CD4-positive, alpha-beta memory T cell (primary cell): ENCODE measurements at regions of chr6 and their contacts with region 1.

Region 1: DNA sequence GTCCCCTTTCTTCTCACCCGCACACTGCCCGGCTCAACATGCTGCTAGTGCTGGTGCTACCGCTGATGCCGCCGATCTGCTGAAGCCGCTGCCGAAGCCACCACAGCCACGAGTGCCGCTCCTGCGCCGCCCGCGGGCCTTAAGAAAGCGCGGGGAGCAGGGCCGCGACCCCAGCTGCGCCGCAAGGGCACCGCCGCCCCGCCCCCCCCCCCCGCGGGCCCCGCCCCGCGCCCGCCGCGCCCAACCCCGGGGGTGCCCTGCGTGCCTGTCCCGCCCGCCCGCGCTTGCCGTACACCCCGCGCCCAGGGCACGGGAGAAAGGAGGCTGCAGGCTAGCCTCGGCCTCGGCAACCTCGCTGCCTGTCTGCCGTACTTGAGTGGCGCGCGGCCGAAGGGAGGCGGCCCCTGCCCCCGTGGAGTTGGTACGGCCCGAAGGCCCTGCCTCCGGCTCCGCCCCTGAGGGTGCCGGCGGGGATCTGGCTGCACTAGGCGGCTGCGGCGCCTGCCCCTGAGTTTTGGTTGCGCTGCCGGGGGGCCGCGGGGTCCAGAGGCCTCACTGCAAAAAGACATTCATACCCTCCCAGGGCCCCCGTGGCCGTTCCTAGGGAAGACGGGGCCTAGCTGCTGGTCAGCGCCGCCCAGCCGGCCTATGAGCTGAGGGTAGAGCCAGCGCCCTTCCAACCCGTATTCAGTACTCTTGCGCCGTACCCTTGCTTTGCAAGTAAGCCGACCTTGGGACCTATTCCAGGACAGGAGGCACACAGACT is at the start of gene SOD2:
- DNase-seq: peak; percentile 85 to 90 (median 86)
- H3K4me3 ChIP-seq: peak within 1 kb of the TSS; percentile 87 to 88
- H3K4me3 Mint-ChIP-seq: peak within 1 kb of the TSS; percentile 93 to 100 (median 96)
- H3K27ac ChIP-seq: peak within 1 kb of the TSS; percentile 64
- H3K27ac Mint-ChIP-seq: peak within 1 kb of the TSS; percentile 96 to 99 (median 98)
- H3K4me1 ChIP-seq: peaks cover 50% of the 10 kb centered on the region
- H3K4me1 Mint-ChIP-seq: peaks cover 31 to 70% (median 47%) of the 10 kb centered on the region in 4 donors
- H3K27me3 ChIP-seq: no peaks in the 10 kb centered on the region
- H3K27me3 Mint-ChIP-seq: no peaks in the 10 kb centered on the region
- total RNA-seq, gene SOD2: 128 to 131 TPM

Region 2: GRCh38 chr6:159608961-159609651 is 84.2 kb before region 1 on chr6:
- CTCF ChIA-PET with region 1: no interaction called
- POLR2A ChIA-PET with region 1: no interaction called
- intact Hi-C with region 1: no loop called
- DNase-seq: no peak
- H3K4me3 ChIP-seq: no peak overlapping the region
- H3K4me3 Mint-ChIP-seq: no peak overlapping the region
- H3K27ac ChIP-seq: no peak overlapping the region
- H3K27ac Mint-ChIP-seq: no peak overlapping the region
- H3K4me1 ChIP-seq: no peaks in the 10 kb centered on the region
- H3K4me1 Mint-ChIP-seq: no peaks in the 10 kb centered on the region
- H3K27me3 ChIP-seq: no peaks in the 10 kb centered on the region
- H3K27me3 Mint-ChIP-seq: peaks cover 1 to 3% of the 10 kb centered on the region in 2 donors

Region 3: GRCh38 chr6:159682295-159682694 is 11.0 kb before region 1 on chr6:
- CTCF ChIA-PET with region 1: interaction called, 6 read pairs
- POLR2A ChIA-PET with region 1: interaction called, 16 read pairs
- intact Hi-C with region 1: no loop called
- DNase-seq: no peak
- H3K4me3 ChIP-seq: no peak overlapping the region
- H3K4me3 Mint-ChIP-seq: no peak overlapping the region
- H3K27ac ChIP-seq: no peak overlapping the region
- H3K27ac Mint-ChIP-seq: peak overlapping the region in 3 of 7 donors; percentile 6 to 69 (median 29)
- H3K4me1 ChIP-seq: peaks cover 10% of the 10 kb centered on the region
- H3K4me1 Mint-ChIP-seq: peaks cover 19 to 27% (median 24%) of the 10 kb centered on the region in 4 donors
- H3K27me3 ChIP-seq: no peaks in the 10 kb centered on the region
- H3K27me3 Mint-ChIP-seq: no peaks in the 10 kb centered on the region

Region 4: GRCh38 chr6:159726918-159727716 is 33.8 kb after region 1 on chr6 and contains the start of gene WTAP:
- CTCF ChIA-PET with region 1: interaction called, 38 read pairs
- POLR2A ChIA-PET with region 1: interaction called, 240 read pairs
- intact Hi-C with region 1: loop called (anchors 1 kb)
- DNase-seq: peak; percentile 96 to 98 (median 97)
- H3K4me3 ChIP-seq: peak within 1 kb of the TSS; percentile 39 to 78
- H3K4me3 Mint-ChIP-seq: peak within 1 kb of the TSS; percentile 91 to 96 (median 95)
- H3K27ac ChIP-seq: peak within 1 kb of the TSS; percentile 97
- H3K27ac Mint-ChIP-seq: peak within 1 kb of the TSS; percentile 99
- H3K4me1 ChIP-seq: peaks cover 65% of the 10 kb centered on the region
- H3K4me1 Mint-ChIP-seq: peaks cover 30 to 74% (median 52%) of the 10 kb centered on the region in 4 donors
- H3K27me3 ChIP-seq: no peaks in the 10 kb centered on the region
- H3K27me3 Mint-ChIP-seq: no peaks in the 10 kb centered on the region
- total RNA-seq, gene WTAP: 151 to 159 TPM

Region 5: DNA sequence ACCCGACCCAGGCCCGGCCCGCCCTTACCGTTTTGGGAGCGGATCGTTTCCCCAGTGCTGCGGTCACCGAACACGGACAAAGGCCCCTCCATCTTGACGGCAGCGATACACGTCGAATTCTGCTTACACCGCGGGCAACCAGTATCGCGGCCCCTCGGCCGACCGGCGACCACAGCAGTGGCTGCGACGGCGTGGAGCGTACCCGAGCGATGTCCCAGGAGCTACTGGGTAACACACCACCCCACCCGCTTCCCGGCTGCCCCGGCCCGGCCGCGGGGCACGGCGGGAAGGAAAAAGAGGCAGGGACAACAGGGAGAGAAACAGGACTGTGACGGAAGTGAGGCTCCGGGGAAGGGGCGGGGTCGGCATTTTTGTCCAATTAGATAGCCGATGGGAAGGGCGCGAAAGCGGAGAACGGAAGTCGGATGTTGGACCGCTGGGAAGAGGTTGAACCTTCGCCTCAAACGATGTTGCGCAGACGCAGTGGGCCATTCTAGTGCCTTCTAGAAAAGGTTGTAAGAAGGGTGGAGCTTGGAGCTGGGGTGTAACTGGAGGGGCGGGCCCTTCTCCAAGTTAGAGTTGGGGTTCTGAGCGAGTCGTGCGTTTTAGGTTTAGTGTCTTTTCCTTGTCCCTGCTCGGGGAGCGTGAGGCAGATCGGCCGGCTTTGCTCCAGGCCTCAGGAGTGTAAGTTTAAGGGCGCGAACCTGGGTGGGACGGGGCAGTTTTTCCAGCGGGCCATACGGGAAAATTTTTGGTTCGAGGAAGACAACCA is 96.3 kb after region 1 on chr6 and contains the start of gene TCP1:
- CTCF ChIA-PET with region 1: interaction called, 37 read pairs
- POLR2A ChIA-PET with region 1: interaction called, 110 read pairs
- intact Hi-C with region 1: loop called (anchors 1 kb)
- DNase-seq: peak; percentile 97 to 100 (median 98)
- H3K4me3 ChIP-seq: peak within 1 kb of the TSS; percentile 81 to 90
- H3K4me3 Mint-ChIP-seq: peak within 1 kb of the TSS; percentile 94 to 99 (median 97)
- H3K27ac ChIP-seq: peak within 1 kb of the TSS; percentile 93
- H3K27ac Mint-ChIP-seq: peak within 1 kb of the TSS; percentile 93 to 99 (median 97)
- H3K4me1 ChIP-seq: peaks cover 54% of the 10 kb centered on the region
- H3K4me1 Mint-ChIP-seq: peaks cover 32 to 75% (median 60%) of the 10 kb centered on the region in 4 donors
- H3K27me3 ChIP-seq: no peaks in the 10 kb centered on the region
- H3K27me3 Mint-ChIP-seq: no peaks in the 10 kb centered on the region
- total RNA-seq, gene TCP1: 151 to 162 TPM

Region 6: GRCh38 chr6:159941286-159942113 is 248.2 kb after region 1 on chr6:
- CTCF ChIA-PET with region 1: interaction called, 18 read pairs
- POLR2A ChIA-PET with region 1: interaction called, 3 read pairs
- intact Hi-C with region 1: loop called (anchors 1 kb)
- DNase-seq: peak; percentile 50 to 66 (median 58)
- H3K4me3 ChIP-seq: no peak overlapping the region
- H3K4me3 Mint-ChIP-seq: no peak overlapping the region
- H3K27ac ChIP-seq: no peak overlapping the region
- H3K27ac Mint-ChIP-seq: no peak overlapping the region
- H3K4me1 ChIP-seq: no peaks in the 10 kb centered on the region
- H3K4me1 Mint-ChIP-seq: peaks cover 0 to 2% (median 0%) of the 10 kb centered on the region in 4 donors
- H3K27me3 ChIP-seq: no peaks in the 10 kb centered on the region
- H3K27me3 Mint-ChIP-seq: peaks cover 1 to 2% of the 10 kb centered on the region in 2 donors

Region 7: GRCh38 chr6:160010067-160010466 is 316.8 kb after region 1 on chr6:
- CTCF ChIA-PET with region 1: no interaction called
- POLR2A ChIA-PET with region 1: interaction called, 8 read pairs
- intact Hi-C with region 1: loop called (anchors 10 kb)
- DNase-seq: no peak
- H3K4me3 ChIP-seq: no peak overlapping the region
- H3K4me3 Mint-ChIP-seq: no peak overlapping the region
- H3K27ac ChIP-seq: no peak overlapping the region
- H3K27ac Mint-ChIP-seq: no peak overlapping the region
- H3K4me1 ChIP-seq: peaks cover 32% of the 10 kb centered on the region
- H3K4me1 Mint-ChIP-seq: peaks cover 39 to 55% (median 44%) of the 10 kb centered on the region in 4 donors
- H3K27me3 ChIP-seq: no peaks in the 10 kb centered on the region
- H3K27me3 Mint-ChIP-seq: no peaks in the 10 kb centered on the region

Region 8: DNA sequence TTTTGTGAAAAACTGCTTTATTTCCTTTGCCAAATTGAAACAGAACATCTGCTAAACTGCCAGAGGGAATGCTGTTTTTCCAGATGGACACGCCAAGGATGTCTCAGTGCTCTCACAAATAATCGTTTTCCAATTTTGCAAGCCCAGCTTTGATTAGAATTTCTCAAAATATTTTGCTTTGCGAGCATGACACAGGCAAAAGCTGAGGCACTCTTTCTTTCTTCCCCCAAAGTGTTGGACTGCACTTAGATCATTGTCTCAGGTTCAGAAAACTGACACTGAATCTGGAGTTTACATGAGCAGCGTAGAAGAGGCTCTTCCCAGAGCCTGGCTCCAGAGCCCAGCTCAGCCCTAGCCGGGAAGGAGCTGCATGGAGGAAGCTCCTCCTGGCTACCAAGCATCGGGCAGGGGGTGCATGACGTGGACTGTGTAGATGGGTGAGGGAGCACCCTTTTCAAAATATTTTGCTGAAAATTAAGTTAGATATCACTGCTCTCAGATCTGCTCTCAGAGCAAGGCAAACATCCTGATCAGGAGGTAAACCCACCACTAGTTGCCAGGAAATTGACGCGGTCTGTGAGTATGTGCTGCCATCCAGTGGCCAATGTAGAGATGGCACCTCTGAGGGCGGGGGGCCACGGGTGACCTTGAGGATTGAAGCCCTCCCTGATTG is 762.4 kb after region 1 on chr6:
- CTCF ChIA-PET with region 1: interaction called, 14 read pairs
- POLR2A ChIA-PET with region 1: no interaction called
- intact Hi-C with region 1: loop called (anchors 1 kb)
- DNase-seq: peak; percentile 58 to 72 (median 68)
- H3K4me3 ChIP-seq: no peak overlapping the region
- H3K4me3 Mint-ChIP-seq: no peak overlapping the region
- H3K27ac ChIP-seq: no peak overlapping the region
- H3K27ac Mint-ChIP-seq: no peak overlapping the region
- H3K4me1 ChIP-seq: peaks cover 50% of the 10 kb centered on the region
- H3K4me1 Mint-ChIP-seq: peaks cover 29 to 36% (median 32%) of the 10 kb centered on the region in 4 donors
- H3K27me3 ChIP-seq: no peaks in the 10 kb centered on the region
- H3K27me3 Mint-ChIP-seq: no peaks in the 10 kb centered on the region